Ovary (tissue), 10 donors: ENCODE measurements at regions of chr10 and their contacts with region 1.

Region 1: DNA sequence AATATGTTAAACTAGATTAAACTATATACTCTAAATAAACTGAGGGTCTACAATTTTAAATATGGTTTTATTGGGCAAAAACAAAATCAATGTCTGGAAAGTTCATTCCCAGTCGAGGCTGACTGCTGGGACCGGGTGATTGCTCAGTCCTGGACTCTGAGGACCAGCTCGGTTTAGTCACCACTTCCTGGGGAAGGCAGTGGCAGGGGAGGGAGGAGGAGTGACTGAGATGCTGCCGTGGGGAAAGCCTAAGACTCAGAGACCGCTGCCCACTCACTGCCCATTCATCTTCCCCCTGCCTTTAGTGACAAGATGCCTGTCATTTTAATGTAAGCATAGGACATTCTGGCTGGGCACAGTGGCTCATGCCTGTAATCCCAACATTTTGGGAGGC is 29.0 kb downstream of the ATOH7 start:
- DNase-seq: no peak
- H3K4me3 ChIP-seq: no peak overlapping the region
- H3K27ac ChIP-seq: no peak overlapping the region
- H3K4me1 ChIP-seq: no peaks in the 10 kb centered on the region
- H3K27me3 ChIP-seq: no peaks in the 10 kb centered on the region
- CTCF ChIP-seq: no peak
- EP300 ChIP-seq: no peak
- POLR2A ChIP-seq: no peak

Region 2: DNA sequence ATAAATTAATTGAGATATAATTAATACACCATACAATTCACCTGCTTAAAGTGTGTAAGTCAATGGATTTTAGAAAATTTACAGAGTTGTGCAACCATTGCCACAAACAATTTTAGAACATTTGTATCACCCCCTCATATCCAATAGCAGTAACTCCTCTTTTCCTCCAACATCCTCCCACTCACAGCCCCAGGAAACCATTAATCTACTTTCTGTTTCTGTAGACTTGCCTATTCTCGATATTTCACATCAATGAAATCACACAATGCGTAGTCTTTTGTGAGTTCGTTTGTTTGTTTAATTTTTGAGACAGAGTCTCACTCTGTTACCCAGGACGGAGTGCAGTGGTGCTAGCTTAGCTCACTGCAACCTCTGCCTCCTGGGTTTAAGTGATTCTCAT is 114.2 kb before region 1 on chr10:
- intact Hi-C with region 1: loop called in 1 of 4 experiments (anchors 5 kb)
- DNase-seq: no peak
- H3K4me3 ChIP-seq: no peak overlapping the region
- H3K27ac ChIP-seq: no peak overlapping the region
- H3K4me1 ChIP-seq: no peaks in the 10 kb centered on the region
- H3K27me3 ChIP-seq: no peaks in the 10 kb centered on the region
- CTCF ChIP-seq: no peak
- EP300 ChIP-seq: no peak
- POLR2A ChIP-seq: no peak